CD4-positive, alpha-beta T cell (primary cell): ENCODE measurements at regions of chr12 and their contacts with region 1.

Region 1: DNA sequence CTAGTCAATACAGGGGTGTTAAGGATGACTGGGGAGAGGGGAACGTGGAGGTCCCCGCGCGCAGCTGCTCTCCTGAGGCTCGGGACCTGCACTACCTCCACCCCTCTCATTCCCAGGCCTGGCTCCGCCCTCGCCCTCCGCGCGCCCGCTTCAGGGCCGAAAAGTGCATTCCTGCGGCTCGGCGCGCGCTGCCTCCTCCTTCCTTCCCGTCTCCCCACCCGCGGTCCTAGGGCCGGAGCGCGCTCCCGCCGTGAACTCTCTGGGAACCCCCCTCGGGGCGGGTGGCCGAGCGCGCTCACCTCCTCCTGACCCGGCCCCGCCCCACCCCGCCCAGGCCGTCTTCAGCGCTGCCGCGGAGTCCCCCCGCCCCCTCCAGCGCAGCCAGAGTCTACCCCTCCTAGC is 11.2 kb downstream of the RARG start:
- DNase-seq: peak; percentile 51 to 94 (median 70)
- ATAC-seq: peak; percentile 47
- H3K4me3 ChIP-seq: peak overlapping the region; percentile 77
- H3K4me3 Mint-ChIP-seq: peak overlapping the region; percentile 100
- H3K27ac ChIP-seq: peak overlapping the region; percentile 92 to 96
- H3K27ac Mint-ChIP-seq: peak overlapping the region; percentile 90
- H3K4me1 ChIP-seq: peaks cover 84% of the 10 kb centered on the region
- H3K4me1 Mint-ChIP-seq: peaks cover 86% of the 10 kb centered on the region
- H3K27me3 ChIP-seq: no peaks in the 10 kb centered on the region
- H3K27me3 Mint-ChIP-seq: no peaks in the 10 kb centered on the region
- CTCF ChIP-seq: no peak

Region 2: GRCh38 chr12:52735816-52736632 is 484.8 kb before region 1 on chr12:
- CTCF ChIA-PET with region 1: no interaction called
- POLR2A ChIA-PET with region 1: no interaction called
- intact Hi-C with region 1: no loop called
- DNase-seq: no peak
- ATAC-seq: no peak
- H3K4me3 ChIP-seq: no peak overlapping the region
- H3K4me3 Mint-ChIP-seq: no peak overlapping the region
- H3K27ac ChIP-seq: no peak overlapping the region
- H3K27ac Mint-ChIP-seq: no peak overlapping the region
- H3K4me1 ChIP-seq: no peaks in the 10 kb centered on the region
- H3K4me1 Mint-ChIP-seq: no peaks in the 10 kb centered on the region
- H3K27me3 ChIP-seq: peaks cover 0 to 5% of the 10 kb centered on the region in 2 experiments
- H3K27me3 Mint-ChIP-seq: peaks cover 18% of the 10 kb centered on the region
- CTCF ChIP-seq: no peak

Region 3: DNA sequence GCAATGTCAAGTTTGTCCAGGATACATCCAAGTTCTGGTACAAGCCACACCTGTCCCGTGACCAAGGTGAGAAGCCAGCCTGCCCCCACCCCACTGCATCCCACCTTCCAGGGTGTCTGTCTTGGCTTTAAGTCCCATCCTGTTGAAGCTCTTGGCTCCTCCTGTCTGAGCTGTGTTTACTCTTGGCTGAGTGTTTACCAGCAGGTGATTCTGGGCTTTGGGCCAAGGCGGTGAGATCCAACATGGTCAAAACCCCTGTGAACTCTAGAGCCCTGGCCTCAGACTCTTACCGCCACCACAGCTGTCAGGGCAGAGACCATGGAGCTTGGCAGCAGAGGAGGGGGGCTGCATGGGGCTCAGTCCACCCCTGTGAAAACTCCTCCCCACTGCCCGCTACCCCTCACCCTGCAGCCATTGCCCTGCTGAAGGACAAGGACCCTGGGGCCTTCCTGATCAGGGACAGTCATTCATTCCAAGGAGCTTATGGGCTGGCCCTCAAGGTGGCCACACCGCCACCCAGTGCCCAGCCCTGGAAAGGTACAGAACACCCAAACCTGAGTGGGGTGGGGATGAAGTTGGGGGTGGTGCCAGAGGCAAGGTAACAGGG is 159.3 kb before region 1 on chr12:
- CTCF ChIA-PET with region 1: no interaction called
- POLR2A ChIA-PET with region 1: no interaction called
- intact Hi-C with region 1: no loop called
- DNase-seq: peak in 1 of 14 experiments; percentile 31
- ATAC-seq: no peak
- H3K4me3 ChIP-seq: no peak overlapping the region
- H3K4me3 Mint-ChIP-seq: no peak overlapping the region
- H3K27ac ChIP-seq: no peak overlapping the region
- H3K27ac Mint-ChIP-seq: no peak overlapping the region
- H3K4me1 ChIP-seq: peaks cover 12% of the 10 kb centered on the region
- H3K4me1 Mint-ChIP-seq: peaks cover 7% of the 10 kb centered on the region
- H3K27me3 ChIP-seq: no peaks in the 10 kb centered on the region
- H3K27me3 Mint-ChIP-seq: no peaks in the 10 kb centered on the region
- CTCF ChIP-seq: no peak

Region 4: DNA sequence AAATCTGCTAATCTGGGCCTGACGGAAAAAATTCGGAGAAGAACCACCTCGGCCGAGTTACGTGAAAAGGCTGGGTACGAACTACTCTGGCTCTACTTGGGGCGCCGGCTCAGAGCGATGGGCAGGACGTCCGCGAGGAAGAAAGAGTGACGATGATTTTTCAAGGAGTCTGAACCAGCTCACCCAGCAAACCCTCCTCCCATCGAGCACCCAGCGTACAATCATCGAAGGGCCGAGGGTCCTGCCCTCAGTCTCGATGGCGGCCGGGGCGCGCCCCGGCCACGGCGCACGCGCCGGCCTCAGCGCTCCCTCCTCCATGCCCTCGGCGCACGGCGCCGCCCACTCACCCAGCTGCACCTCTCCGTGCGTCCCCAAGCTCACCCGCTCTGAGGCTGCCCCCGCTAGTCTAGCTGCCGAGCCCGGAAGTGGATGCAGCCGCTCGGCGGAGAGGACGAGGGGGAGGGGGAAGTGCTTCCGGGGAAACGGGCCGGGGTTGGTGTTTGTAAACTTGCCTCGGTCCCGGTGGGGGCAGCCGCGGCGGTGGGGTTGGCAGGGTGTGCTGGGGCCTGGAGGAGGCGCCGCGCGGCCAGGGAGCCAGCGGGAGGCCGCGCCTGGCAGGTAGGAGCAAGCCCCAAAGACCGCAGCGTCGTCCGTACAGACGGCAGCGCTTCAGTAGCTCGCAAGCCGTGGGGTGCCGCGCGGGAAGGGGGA is 40.4 kb before region 1 on chr12 and contains the starts of genes CSAD and ZNF740:
- CTCF ChIA-PET with region 1: no interaction called
- POLR2A ChIA-PET with region 1: interaction called, 30 read pairs
- intact Hi-C with region 1: loop called (anchors 1 to 5 kb)
- DNase-seq: peak; percentile 92 to 99 (median 97)
- ATAC-seq: peak; percentile 93
- H3K4me3 ChIP-seq: peak within 1 kb of the TSS; percentile 94
- H3K4me3 Mint-ChIP-seq: peak within 1 kb of the TSS; percentile 98
- H3K27ac ChIP-seq: peak within 1 kb of the TSS; percentile 87 to 92
- H3K27ac Mint-ChIP-seq: peak within 1 kb of the TSS; percentile 94
- H3K4me1 ChIP-seq: peaks cover 52% of the 10 kb centered on the region
- H3K4me1 Mint-ChIP-seq: peaks cover 57% of the 10 kb centered on the region
- H3K27me3 ChIP-seq: no peaks in the 10 kb centered on the region
- H3K27me3 Mint-ChIP-seq: no peaks in the 10 kb centered on the region
- CTCF ChIP-seq: no peak
- total RNA-seq, gene CSAD: 56.7 to 57.3 TPM
- total RNA-seq, gene ZNF740: 24.4 to 24.7 TPM

Region 5: GRCh38 chr12:53200458-53201176 is 20.2 kb before region 1 on chr12:
- CTCF ChIA-PET with region 1: interaction called, 3 read pairs
- POLR2A ChIA-PET with region 1: interaction called, 18 read pairs
- intact Hi-C with region 1: no loop called
- DNase-seq: peak in 4 of 14 experiments; percentile 40 to 53 (median 47)
- ATAC-seq: peak; percentile 53
- H3K4me3 ChIP-seq: peak overlapping the region; percentile 19
- H3K4me3 Mint-ChIP-seq: peak overlapping the region; percentile 86
- H3K27ac ChIP-seq: peak overlapping the region; percentile 31 to 63
- H3K27ac Mint-ChIP-seq: peak overlapping the region; percentile 88
- H3K4me1 ChIP-seq: peaks cover 89% of the 10 kb centered on the region
- H3K4me1 Mint-ChIP-seq: peaks cover 81% of the 10 kb centered on the region
- H3K27me3 ChIP-seq: no peaks in the 10 kb centered on the region
- H3K27me3 Mint-ChIP-seq: no peaks in the 10 kb centered on the region
- CTCF ChIP-seq: no peak

Region 6: GRCh38 chr12:53205747-53206419 is 14.9 kb before region 1 on chr12:
- CTCF ChIA-PET with region 1: interaction called, 3 read pairs
- POLR2A ChIA-PET with region 1: interaction called, 41 read pairs
- intact Hi-C with region 1: no loop called
- DNase-seq: peak in 11 of 14 experiments; percentile 31 to 75 (median 55)
- ATAC-seq: peak; percentile 43
- H3K4me3 ChIP-seq: peak overlapping the region; percentile 84
- H3K4me3 Mint-ChIP-seq: peak overlapping the region; percentile 84
- H3K27ac ChIP-seq: peak overlapping the region; percentile 70 to 82
- H3K27ac Mint-ChIP-seq: peak overlapping the region; percentile 73
- H3K4me1 ChIP-seq: peaks cover 90% of the 10 kb centered on the region
- H3K4me1 Mint-ChIP-seq: peaks cover 72% of the 10 kb centered on the region
- H3K27me3 ChIP-seq: no peaks in the 10 kb centered on the region
- H3K27me3 Mint-ChIP-seq: no peaks in the 10 kb centered on the region
- CTCF ChIP-seq: no peak

Region 7: GRCh38 chr12:53231826-53232645 is 11.2 kb after region 1 on chr12 and contains the start of gene RARG:
- CTCF ChIA-PET with region 1: no interaction called
- POLR2A ChIA-PET with region 1: interaction called, 43 read pairs
- intact Hi-C with region 1: loop called in 1 of 2 experiments (anchors 1 kb)
- DNase-seq: peak in 12 of 14 experiments; percentile 47 to 86 (median 66)
- ATAC-seq: peak; percentile 66
- H3K4me3 ChIP-seq: peak within 1 kb of the TSS; percentile 55
- H3K4me3 Mint-ChIP-seq: peak within 1 kb of the TSS; percentile 91
- H3K27ac ChIP-seq: peak within 1 kb of the TSS; percentile 55 to 86
- H3K27ac Mint-ChIP-seq: peak within 1 kb of the TSS; percentile 81
- H3K4me1 ChIP-seq: peaks cover 93% of the 10 kb centered on the region
- H3K4me1 Mint-ChIP-seq: peaks cover 72% of the 10 kb centered on the region
- H3K27me3 ChIP-seq: no peaks in the 10 kb centered on the region
- H3K27me3 Mint-ChIP-seq: no peaks in the 10 kb centered on the region
- CTCF ChIP-seq: no peak
- total RNA-seq, gene RARG: 14.0 to 15.8 TPM

Region 8: DNA sequence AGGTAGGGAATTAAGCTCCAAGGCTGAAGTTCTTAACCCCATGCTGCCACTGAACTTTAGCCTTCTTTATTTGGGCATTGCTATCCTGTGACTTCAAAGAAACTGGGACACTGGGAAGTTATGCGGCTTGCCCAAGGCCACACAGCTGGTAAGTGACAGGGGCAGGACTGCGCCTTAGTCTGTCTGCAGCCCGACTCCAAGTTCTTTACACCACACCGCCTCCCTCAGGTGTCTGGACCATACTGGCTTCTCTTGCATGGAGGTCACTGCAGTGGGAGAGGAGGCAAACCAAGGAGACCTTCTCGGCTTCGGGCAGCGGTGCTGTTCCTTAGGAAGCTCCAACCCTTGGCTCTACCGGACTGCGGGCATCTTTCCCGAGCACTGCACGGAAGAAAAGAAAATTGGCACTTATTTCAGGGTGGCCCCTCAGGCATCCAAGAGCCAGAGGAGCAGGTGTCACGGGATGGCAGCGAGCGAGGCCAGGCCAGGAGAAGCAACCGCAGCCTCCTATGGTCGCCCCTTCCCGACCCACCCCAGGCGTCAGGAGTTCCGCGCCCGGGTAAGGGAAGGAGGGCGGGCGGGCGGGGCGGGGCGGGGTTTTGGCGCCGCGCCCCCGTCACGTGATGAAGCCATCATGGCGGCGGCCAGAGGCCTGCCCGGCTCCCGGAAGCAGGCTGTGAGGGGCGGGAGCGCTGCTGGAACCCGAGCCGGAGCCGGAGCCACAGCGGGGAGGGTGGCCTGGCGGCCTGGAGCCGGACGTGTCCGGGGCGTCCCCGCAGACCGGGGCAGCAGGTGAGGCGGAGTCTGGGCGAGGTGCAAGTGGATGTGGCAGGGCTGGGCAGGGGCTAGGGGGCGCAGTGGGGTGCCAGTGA is 30.9 kb after region 1 on chr12:
- CTCF ChIA-PET with region 1: interaction called, 68 read pairs
- POLR2A ChIA-PET with region 1: interaction called, 26 read pairs
- intact Hi-C with region 1: no loop called
- DNase-seq: peak; percentile 43 to 87 (median 65)
- ATAC-seq: peak; percentile 86
- H3K4me3 ChIP-seq: peak overlapping the region; percentile 89
- H3K4me3 Mint-ChIP-seq: peak overlapping the region; percentile 99
- H3K27ac ChIP-seq: peak overlapping the region; percentile 50 to 74
- H3K27ac Mint-ChIP-seq: peak overlapping the region; percentile 93
- H3K4me1 ChIP-seq: peaks cover 51% of the 10 kb centered on the region
- H3K4me1 Mint-ChIP-seq: peaks cover 52% of the 10 kb centered on the region
- H3K27me3 ChIP-seq: no peaks in the 10 kb centered on the region
- H3K27me3 Mint-ChIP-seq: no peaks in the 10 kb centered on the region
- CTCF ChIP-seq: peak; percentile 57

Region 9: GRCh38 chr12:53267999-53268647 is 47.3 kb after region 1 on chr12 and contains the start of gene ESPL1:
- CTCF ChIA-PET with region 1: interaction called, 19 read pairs
- POLR2A ChIA-PET with region 1: interaction called, 28 read pairs
- intact Hi-C with region 1: loop called in 1 of 2 experiments (anchors 5 kb)
- DNase-seq: peak; percentile 55 to 93 (median 74)
- ATAC-seq: peak; percentile 91
- H3K4me3 ChIP-seq: peak within 1 kb of the TSS; percentile 86
- H3K4me3 Mint-ChIP-seq: peak within 1 kb of the TSS; percentile 95
- H3K27ac ChIP-seq: peak within 1 kb of the TSS; percentile 40 to 50
- H3K27ac Mint-ChIP-seq: peak within 1 kb of the TSS; percentile 82
- H3K4me1 ChIP-seq: peaks cover 18% of the 10 kb centered on the region
- H3K4me1 Mint-ChIP-seq: peaks cover 19% of the 10 kb centered on the region
- H3K27me3 ChIP-seq: no peaks in the 10 kb centered on the region
- H3K27me3 Mint-ChIP-seq: no peaks in the 10 kb centered on the region
- CTCF ChIP-seq: peak; percentile 36
- total RNA-seq, gene ESPL1: 0.20 to 0.71 TPM

Region 10: GRCh38 chr12:53336181-53336681 is 115.4 kb after region 1 on chr12 and contains the start of gene SP7:
- CTCF ChIA-PET with region 1: no interaction called
- POLR2A ChIA-PET with region 1: no interaction called
- intact Hi-C with region 1: no loop called
- DNase-seq: no peak
- ATAC-seq: no peak
- H3K4me3 ChIP-seq: no peak within 1 kb of the TSS
- H3K4me3 Mint-ChIP-seq: no peak within 1 kb of the TSS
- H3K27ac ChIP-seq: no peak within 1 kb of the TSS
- H3K27ac Mint-ChIP-seq: no peak within 1 kb of the TSS
- H3K4me1 ChIP-seq: peaks cover 4% of the 10 kb centered on the region
- H3K4me1 Mint-ChIP-seq: peaks cover 4% of the 10 kb centered on the region
- H3K27me3 ChIP-seq: peaks cover 35 to 50% of the 10 kb centered on the region in 2 experiments
- H3K27me3 Mint-ChIP-seq: peaks cover 52% of the 10 kb centered on the region
- CTCF ChIP-seq: no peak
- total RNA-seq, gene SP7: 0.14 TPM in 1 of 2 experiments, not detected in the other

Region 11: GRCh38 chr12:54159140-54159539 is 938.3 kb after region 1 on chr12:
- CTCF ChIA-PET with region 1: no interaction called
- POLR2A ChIA-PET with region 1: no interaction called
- intact Hi-C with region 1: no loop called
- DNase-seq: peak in 3 of 14 experiments; percentile 10 to 33 (median 12)
- ATAC-seq: peak; percentile 68
- H3K4me3 ChIP-seq: no peak overlapping the region
- H3K4me3 Mint-ChIP-seq: no peak overlapping the region
- H3K27ac ChIP-seq: no peak overlapping the region
- H3K27ac Mint-ChIP-seq: no peak overlapping the region
- H3K4me1 ChIP-seq: no peaks in the 10 kb centered on the region
- H3K4me1 Mint-ChIP-seq: no peaks in the 10 kb centered on the region
- H3K27me3 ChIP-seq: peaks cover 0 to 11% of the 10 kb centered on the region in 2 experiments
- H3K27me3 Mint-ChIP-seq: peaks cover 82% of the 10 kb centered on the region
- CTCF ChIP-seq: no peak